ENCODE measurements at regions of chr18 and their contacts with region 1.

Region 1: DNA sequence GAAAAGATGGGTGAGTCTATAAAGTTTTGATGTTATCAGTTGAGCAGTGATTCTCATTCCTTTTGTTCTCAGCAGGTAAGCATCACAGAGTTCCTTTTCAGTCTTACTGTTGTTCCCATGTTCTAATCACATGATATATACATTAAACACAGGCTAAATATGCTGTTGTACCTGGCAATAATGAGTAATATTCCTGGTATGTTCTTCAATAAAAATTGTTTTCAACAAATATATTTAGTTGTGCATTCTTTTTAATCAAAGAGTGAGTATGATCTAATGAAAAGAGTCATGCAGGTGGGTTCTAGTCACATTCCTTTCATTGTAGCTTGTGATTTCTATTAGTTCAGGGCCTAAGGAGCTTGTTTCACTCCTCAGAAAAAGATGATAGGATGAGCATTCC is 288.3 kb upstream of the NETO1 start:
- DNase-seq: no peak
- H3K4me3 Mint-ChIP-seq: no peak overlapping the region
- H3K27ac Mint-ChIP-seq: no peak overlapping the region
- H3K4me1 Mint-ChIP-seq: no peaks in the 10 kb centered on the region
- H3K27me3 Mint-ChIP-seq: no peaks in the 10 kb centered on the region

Region 2: GRCh38 chr18:73214967-73215366 is 58.9 kb after region 1 on chr18:
- intact Hi-C with region 1: no loop called
- DNase-seq: no peak
- H3K4me3 Mint-ChIP-seq: no peak overlapping the region
- H3K27ac Mint-ChIP-seq: no peak overlapping the region
- H3K4me1 Mint-ChIP-seq: no peaks in the 10 kb centered on the region
- H3K27me3 Mint-ChIP-seq: no peaks in the 10 kb centered on the region

Region 3: GRCh38 chr18:73479477-73479876 is 323.4 kb after region 1 on chr18:
- intact Hi-C with region 1: loop called (anchors 5 kb)
- DNase-seq: no peak
- H3K4me3 Mint-ChIP-seq: no peak overlapping the region
- H3K27ac Mint-ChIP-seq: no peak overlapping the region
- H3K4me1 Mint-ChIP-seq: no peaks in the 10 kb centered on the region
- H3K27me3 Mint-ChIP-seq: no peaks in the 10 kb centered on the region

Region 4: GRCh38 chr18:73638709-73639108 is 482.6 kb after region 1 on chr18:
- intact Hi-C with region 1: no loop called
- DNase-seq: no peak
- H3K4me3 Mint-ChIP-seq: no peak overlapping the region
- H3K27ac Mint-ChIP-seq: no peak overlapping the region
- H3K4me1 Mint-ChIP-seq: no peaks in the 10 kb centered on the region
- H3K27me3 Mint-ChIP-seq: no peaks in the 10 kb centered on the region